ENCODE measurements at regions of chr7 and their contacts with region 1.

Region 1: GRCh38 chr7:113026941-113027340 is 59.7 kb downstream of the GPR85 start:
- DNase-seq: peak; percentile 74
- H3K4me3 ChIP-seq: no peak overlapping the region
- H3K27ac ChIP-seq: no peak overlapping the region
- H3K4me1 ChIP-seq: peaks cover 10% of the 10 kb centered on the region
- H3K27me3 ChIP-seq: no peaks in the 10 kb centered on the region

Region 2: DNA sequence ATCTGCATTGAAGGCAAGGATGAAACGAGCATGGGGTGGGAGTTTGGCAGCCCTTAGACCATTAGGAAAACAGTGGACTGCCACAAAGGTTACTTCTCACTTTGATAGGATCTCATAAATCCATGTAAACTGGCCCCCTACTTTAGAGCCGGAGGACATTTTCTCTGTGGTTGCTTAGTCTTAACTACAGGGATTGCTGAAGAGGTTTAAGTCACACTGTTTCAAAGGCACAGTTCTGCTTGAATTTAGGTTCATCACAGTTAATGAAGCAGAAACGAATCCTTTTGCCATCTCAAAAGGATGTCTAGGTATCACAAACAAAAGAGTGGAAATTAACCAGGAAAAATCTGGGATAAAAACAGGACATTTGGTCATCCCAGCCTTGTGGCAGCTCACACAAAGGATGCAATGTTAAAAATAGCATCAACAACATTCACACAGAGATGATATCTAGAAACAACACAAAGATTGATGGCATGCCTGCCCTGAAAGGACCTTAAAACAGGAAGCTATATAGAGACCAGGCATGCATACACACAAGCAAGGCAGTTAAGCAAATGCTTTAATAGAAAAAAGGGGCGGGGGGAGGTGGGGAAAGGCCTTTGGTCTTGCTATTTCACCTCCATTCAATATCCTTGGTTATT is 894.8 kb before region 1 on chr7:
- in situ Hi-C with region 1: no loop called
- DNase-seq: no peak
- H3K4me3 ChIP-seq: no peak overlapping the region
- H3K27ac ChIP-seq: no peak overlapping the region
- H3K4me1 ChIP-seq: no peaks in the 10 kb centered on the region
- H3K27me3 ChIP-seq: no peaks in the 10 kb centered on the region

Region 3: GRCh38 chr7:113292105-113292504 is 265.2 kb after region 1 on chr7:
- in situ Hi-C with region 1: loop called (anchors 10 kb)
- DNase-seq: no peak
- H3K4me3 ChIP-seq: no peak overlapping the region
- H3K27ac ChIP-seq: no peak overlapping the region
- H3K4me1 ChIP-seq: no peaks in the 10 kb centered on the region
- H3K27me3 ChIP-seq: 0 out of 2 replicates have a peak, but pooled peaks cover 16% of the 10 kb centered on the region